Activated CD4-positive, alpha-beta T cell treated with anti-CD3 and anti-CD28 coated beads for 36 hours (primary cell): ENCODE measurements at regions of chr1 and their contacts with region 1.

Region 1: DNA sequence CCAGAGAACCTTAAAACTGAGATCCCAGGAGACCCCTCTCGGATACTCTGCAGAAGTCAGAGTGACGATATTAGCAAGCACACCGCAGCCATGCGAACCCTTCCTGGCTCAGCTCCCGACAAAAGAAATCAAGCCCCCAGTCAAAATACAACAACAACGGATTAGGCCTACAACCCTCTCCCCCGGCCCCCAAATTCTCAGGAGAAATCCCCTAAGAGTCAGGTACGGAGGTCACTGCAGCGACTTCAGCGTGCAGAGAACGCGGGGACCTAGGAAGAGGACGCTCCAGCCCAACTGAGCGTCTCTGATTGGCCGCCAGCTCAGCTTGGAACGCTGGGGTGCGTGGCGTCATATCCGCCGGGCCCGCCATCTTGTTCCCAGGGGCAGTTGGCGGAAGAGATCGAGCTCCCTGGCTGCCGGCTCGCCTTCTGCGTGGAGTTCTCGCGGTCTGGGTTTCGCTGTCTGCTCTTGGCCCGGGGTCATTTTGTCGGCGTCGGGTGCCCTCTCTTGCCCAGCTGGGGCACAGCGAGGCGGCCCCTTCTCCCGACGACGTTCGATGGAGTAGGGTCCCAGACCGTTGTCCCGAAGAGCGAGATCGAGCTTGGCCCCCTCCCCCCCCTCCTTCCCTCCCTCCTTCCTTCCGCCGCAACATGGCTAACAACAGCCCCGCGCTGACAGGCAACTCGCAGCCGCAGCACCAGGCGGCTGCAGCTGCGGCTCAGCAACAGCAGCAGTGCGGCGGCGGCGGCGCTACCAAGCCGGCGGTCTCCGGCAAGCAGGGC is at the start of gene PRPF38B:
- DNase-seq: peak; percentile 97
- ATAC-seq: peak; percentile 92
- H3K4me3 Mint-ChIP-seq: peak within 1 kb of the TSS; percentile 93
- H3K27ac Mint-ChIP-seq: peak within 1 kb of the TSS; percentile 95
- H3K4me1 Mint-ChIP-seq: peaks cover 38% of the 10 kb centered on the region
- H3K27me3 Mint-ChIP-seq: no peaks in the 10 kb centered on the region
- total RNA-seq, gene PRPF38B: 57.9 to 61.1 TPM

Region 2: DNA sequence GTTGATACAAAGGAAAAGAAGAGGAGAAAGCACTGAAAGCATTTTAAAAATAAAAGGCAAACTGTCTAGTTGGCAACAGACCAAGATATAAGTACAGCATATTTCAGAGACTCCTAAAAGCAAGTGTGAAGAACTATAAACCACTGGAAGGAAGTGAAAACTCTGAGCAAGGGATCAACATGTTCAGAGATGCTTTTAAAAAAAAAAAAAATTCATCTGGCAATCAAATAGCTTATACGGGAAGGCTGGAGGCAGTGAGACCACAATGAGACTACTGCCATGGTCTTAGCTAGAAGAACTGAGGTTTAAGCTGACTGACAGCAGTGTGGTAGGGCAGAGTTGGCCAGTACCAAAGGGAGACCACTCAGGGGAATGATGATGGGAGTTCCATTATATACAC is 851.4 kb before region 1 on chr1:
- CTCF ChIA-PET with region 1: no interaction called
- POLR2A ChIA-PET with region 1: no interaction called
- intact Hi-C with region 1: no loop called
- DNase-seq: no peak
- ATAC-seq: no peak
- H3K4me3 Mint-ChIP-seq: no peak overlapping the region
- H3K27ac Mint-ChIP-seq: peak overlapping the region; percentile 32
- H3K4me1 Mint-ChIP-seq: peaks cover 67% of the 10 kb centered on the region
- H3K27me3 Mint-ChIP-seq: no peaks in the 10 kb centered on the region

Region 3: GRCh38 chr1:108575375-108575774 is 116.8 kb before region 1 on chr1:
- CTCF ChIA-PET with region 1: no interaction called
- POLR2A ChIA-PET with region 1: no interaction called
- intact Hi-C with region 1: no loop called
- DNase-seq: no peak
- ATAC-seq: no peak
- H3K4me3 Mint-ChIP-seq: no peak overlapping the region
- H3K27ac Mint-ChIP-seq: peak overlapping the region; percentile 1
- H3K4me1 Mint-ChIP-seq: peaks cover 8% of the 10 kb centered on the region
- H3K27me3 Mint-ChIP-seq: no peaks in the 10 kb centered on the region

Region 4: GRCh38 chr1:108590957-108591356 is 101.2 kb before region 1 on chr1:
- CTCF ChIA-PET with region 1: no interaction called
- POLR2A ChIA-PET with region 1: no interaction called
- intact Hi-C with region 1: loop called in 1 of 2 experiments (anchors 5 kb)
- DNase-seq: no peak
- ATAC-seq: peak; percentile 79
- H3K4me3 Mint-ChIP-seq: no peak overlapping the region
- H3K27ac Mint-ChIP-seq: no peak overlapping the region
- H3K4me1 Mint-ChIP-seq: peaks cover 63% of the 10 kb centered on the region
- H3K27me3 Mint-ChIP-seq: no peaks in the 10 kb centered on the region

Region 5: DNA sequence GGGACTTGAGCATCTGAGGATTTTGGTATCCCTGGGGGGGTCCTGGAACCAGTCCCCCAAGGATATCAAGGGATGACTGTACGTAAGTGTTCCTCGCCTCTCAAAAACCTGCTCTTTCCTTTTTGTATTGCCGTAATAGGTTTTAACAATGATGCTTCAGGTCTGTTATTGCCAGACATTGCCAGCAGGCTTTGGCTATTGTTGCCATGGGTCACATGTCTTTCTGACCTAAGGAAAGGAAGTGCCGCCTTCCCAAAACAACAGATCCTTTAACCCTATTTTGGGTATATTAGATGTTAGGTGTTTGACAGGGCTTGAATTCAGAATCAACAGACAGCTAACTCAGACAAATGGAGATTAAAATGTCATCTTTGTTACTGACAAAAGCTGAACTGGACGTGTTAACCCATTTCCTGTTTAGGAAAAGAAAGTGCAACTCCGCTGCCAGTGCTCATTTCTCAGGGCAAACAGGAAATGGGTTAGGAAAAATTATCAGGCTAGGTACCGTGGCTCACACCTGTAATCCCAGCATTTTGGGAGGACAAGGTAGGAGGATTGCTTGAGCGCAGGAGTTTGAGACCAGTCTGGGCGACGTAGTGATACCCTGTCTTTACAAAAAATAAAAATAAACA is 12.4 kb before region 1 on chr1:
- CTCF ChIA-PET with region 1: interaction called, 11 read pairs
- POLR2A ChIA-PET with region 1: interaction called, 7 read pairs
- intact Hi-C with region 1: no loop called
- DNase-seq: no peak
- ATAC-seq: no peak
- H3K4me3 Mint-ChIP-seq: no peak overlapping the region
- H3K27ac Mint-ChIP-seq: peak overlapping the region; percentile 60
- H3K4me1 Mint-ChIP-seq: peaks cover 7% of the 10 kb centered on the region
- H3K27me3 Mint-ChIP-seq: no peaks in the 10 kb centered on the region

Region 6: GRCh38 chr1:108877348-108878159 is 185.4 kb after region 1 on chr1:
- CTCF ChIA-PET with region 1: no interaction called
- POLR2A ChIA-PET with region 1: no interaction called
- intact Hi-C with region 1: loop called in 1 of 2 experiments (anchors 1 kb)
- DNase-seq: no peak
- ATAC-seq: peak; percentile 2
- H3K4me3 Mint-ChIP-seq: peak overlapping the region; percentile 91
- H3K27ac Mint-ChIP-seq: peak overlapping the region; percentile 78
- H3K4me1 Mint-ChIP-seq: peaks cover 5% of the 10 kb centered on the region
- H3K27me3 Mint-ChIP-seq: peaks cover 5% of the 10 kb centered on the region

Region 7: GRCh38 chr1:109041621-109042468 is 349.7 kb after region 1 on chr1 and contains the start of gene WDR47:
- CTCF ChIA-PET with region 1: no interaction called
- POLR2A ChIA-PET with region 1: interaction called, 3 read pairs
- intact Hi-C with region 1: loop called in 1 of 2 experiments (anchors 2 kb)
- DNase-seq: peak; percentile 98
- ATAC-seq: peak; percentile 99
- H3K4me3 Mint-ChIP-seq: peak within 1 kb of the TSS; percentile 82
- H3K27ac Mint-ChIP-seq: peak within 1 kb of the TSS; percentile 65
- H3K4me1 Mint-ChIP-seq: peaks cover 16% of the 10 kb centered on the region
- H3K27me3 Mint-ChIP-seq: no peaks in the 10 kb centered on the region
- total RNA-seq, gene WDR47: 6.9 to 7.6 TPM

Region 8: DNA sequence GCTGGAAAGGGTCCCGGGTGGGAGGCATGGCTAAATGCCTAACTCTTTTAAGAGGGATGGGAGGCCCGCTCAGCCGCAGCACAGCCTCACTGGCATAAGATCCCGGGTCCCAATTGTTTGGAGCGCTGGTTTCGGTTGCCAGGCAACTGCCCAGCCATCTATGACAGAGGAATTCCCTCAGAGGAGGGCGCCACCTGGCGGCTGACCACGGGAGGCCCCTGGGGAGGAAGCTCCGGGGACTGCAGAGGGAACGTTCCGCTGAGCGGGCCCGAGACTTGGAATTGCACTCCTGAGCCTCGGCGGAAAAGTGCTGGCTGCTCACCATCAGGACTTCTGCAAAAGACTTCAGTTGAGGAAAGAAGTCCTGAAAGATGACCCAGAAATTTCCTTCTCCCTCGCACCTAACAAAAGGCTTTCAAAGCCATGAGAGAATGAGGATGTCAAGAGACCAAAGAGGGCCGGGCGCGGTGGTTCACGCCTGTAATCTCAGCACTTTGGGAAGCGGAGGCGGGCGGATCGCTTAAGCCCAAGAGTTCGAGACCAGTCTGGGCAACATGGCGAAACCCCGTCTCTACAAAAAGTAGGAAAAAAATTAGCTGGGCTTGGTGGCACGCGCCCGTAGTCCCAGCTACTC is 420.6 kb after region 1 on chr1:
- CTCF ChIA-PET with region 1: no interaction called
- POLR2A ChIA-PET with region 1: no interaction called
- intact Hi-C with region 1: loop called in 1 of 2 experiments (anchors 5 kb)
- DNase-seq: peak; percentile 95
- ATAC-seq: peak; percentile 62
- H3K4me3 Mint-ChIP-seq: peak overlapping the region; percentile 71
- H3K27ac Mint-ChIP-seq: peak overlapping the region; percentile 65
- H3K4me1 Mint-ChIP-seq: peaks cover 41% of the 10 kb centered on the region
- H3K27me3 Mint-ChIP-seq: no peaks in the 10 kb centered on the region